B cell (primary cell): ENCODE measurements at regions of chr2 and their contacts with region 1.

Region 1: DNA sequence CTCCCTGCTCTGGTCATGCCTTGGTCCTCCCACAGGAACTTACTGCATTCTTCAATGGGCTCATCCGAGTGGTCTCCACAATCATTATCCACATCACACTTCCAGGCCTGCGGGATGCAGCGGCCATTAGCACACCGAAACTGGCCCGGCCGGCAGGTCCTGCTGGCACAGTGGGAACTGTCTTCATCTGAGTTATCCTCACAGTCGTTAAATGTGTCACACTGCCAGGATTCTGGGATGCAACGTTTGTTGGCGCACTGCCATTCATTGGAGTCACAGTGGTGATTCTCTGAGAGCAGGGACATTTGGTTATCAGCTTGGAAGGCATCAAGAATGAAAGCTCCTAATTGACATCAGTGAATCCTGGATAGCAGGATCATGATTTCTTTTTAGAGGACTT is 104.5 kb downstream of the DHRS9 start:
- DNase-seq: no peak
- ATAC-seq: no peak
- H3K4me3 ChIP-seq: no peak overlapping the region
- H3K4me3 Mint-ChIP-seq: no peak overlapping the region
- H3K27ac ChIP-seq: no peak overlapping the region
- H3K27ac Mint-ChIP-seq: no peak overlapping the region
- H3K4me1 ChIP-seq: no peaks in the 10 kb centered on the region
- H3K4me1 Mint-ChIP-seq: no peaks in the 10 kb centered on the region
- H3K27me3 ChIP-seq: peaks cover 0 to 2% (median under 1%) of the 10 kb centered on the region in 4 experiments
- H3K27me3 Mint-ChIP-seq: peaks cover 8% of the 10 kb centered on the region
- CTCF ChIP-seq: no peak

Region 2: DNA sequence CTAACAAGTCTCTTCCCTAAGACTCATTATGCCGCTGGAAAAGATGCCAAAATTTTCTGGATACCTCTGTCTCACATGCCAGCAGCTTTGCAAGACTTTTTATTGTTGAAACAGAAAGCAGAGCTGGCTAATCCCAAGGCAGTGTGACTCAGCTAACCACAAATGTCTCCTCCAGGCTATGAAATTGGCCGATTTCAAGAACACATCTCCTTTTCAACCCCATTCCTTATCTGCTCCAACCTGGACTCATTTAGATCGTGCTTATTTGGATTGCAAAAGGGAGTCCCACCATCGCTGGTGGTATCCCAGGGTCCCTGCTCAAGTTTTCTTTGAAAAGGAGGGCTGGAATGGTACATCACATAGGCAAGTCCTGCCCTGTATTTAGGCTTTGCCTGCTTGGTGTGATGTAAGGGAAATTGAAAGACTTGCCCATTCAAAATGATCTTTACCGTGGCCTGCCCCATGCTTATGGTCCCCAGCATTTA is 78.2 kb before region 1 on chr2:
- CTCF ChIA-PET with region 1: no interaction called
- POLR2A ChIA-PET with region 1: no interaction called
- intact Hi-C with region 1: loop called (anchors 2 kb)
- DNase-seq: no peak
- ATAC-seq: no peak
- H3K4me3 ChIP-seq: no peak overlapping the region
- H3K4me3 Mint-ChIP-seq: no peak overlapping the region
- H3K27ac ChIP-seq: no peak overlapping the region
- H3K27ac Mint-ChIP-seq: no peak overlapping the region
- H3K4me1 ChIP-seq: peaks cover 18 to 19% of the 10 kb centered on the region in 2 donors
- H3K4me1 Mint-ChIP-seq: peaks cover 28% of the 10 kb centered on the region
- H3K27me3 ChIP-seq: no peaks in the 10 kb centered on the region
- H3K27me3 Mint-ChIP-seq: no peaks in the 10 kb centered on the region
- CTCF ChIP-seq: no peak